Panc1 (cell line): ENCODE measurements at regions of chr5 and their contacts with region 1.

Region 1: GRCh38 chr5:127590156-127590722 is 58.6 kb upstream of the CTXN3 start:
- DNase-seq: no peak
- ATAC-seq: no peak
- H3K4me3 ChIP-seq: no peak overlapping the region
- H3K27ac ChIP-seq: no peak overlapping the region
- H3K4me1 ChIP-seq: no peaks in the 10 kb centered on the region
- H3K27me3 ChIP-seq: no peaks in the 10 kb centered on the region
- CTCF ChIP-seq: no peak

Region 2: DNA sequence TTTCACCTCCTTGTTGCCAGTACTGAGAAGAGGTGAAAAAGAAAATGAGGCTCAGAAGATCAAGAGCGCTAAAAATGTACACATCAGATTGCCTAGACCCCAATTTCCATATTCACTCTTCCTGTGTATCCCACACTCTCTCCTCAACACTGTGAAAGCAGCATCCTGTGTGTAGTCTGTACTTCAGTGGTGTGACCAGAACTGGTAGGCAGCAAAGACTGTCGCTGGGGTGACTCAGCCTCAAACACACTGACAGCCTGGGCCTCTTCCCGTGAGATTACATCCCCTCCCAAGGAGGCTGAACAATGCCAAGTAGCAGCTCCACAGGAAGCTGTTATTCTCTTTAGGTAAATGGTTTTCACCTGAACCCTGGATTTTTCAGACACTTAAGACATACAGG is 248.4 kb after region 1 on chr5:
- CTCF ChIA-PET with region 1: no interaction called
- POLR2A ChIA-PET with region 1: interaction called, 10 read pairs
- in situ Hi-C with region 1: no loop called
- intact Hi-C with region 1: no loop called
- DNase-seq: no peak
- ATAC-seq: no peak
- H3K4me3 ChIP-seq: no peak overlapping the region
- H3K27ac ChIP-seq: no peak overlapping the region
- H3K4me1 ChIP-seq: no peaks in the 10 kb centered on the region
- H3K27me3 ChIP-seq: no peaks in the 10 kb centered on the region
- CTCF ChIP-seq: no peak

Region 3: GRCh38 chr5:128674825-128675446 is 1084.7 kb after region 1 on chr5:
- CTCF ChIA-PET with region 1: no interaction called
- POLR2A ChIA-PET with region 1: no interaction called
- in situ Hi-C with region 1: no loop called
- intact Hi-C with region 1: no loop called
- DNase-seq: peak; percentile 15
- ATAC-seq: no peak
- H3K4me3 ChIP-seq: no peak overlapping the region
- H3K27ac ChIP-seq: no peak overlapping the region
- H3K4me1 ChIP-seq: no peaks in the 10 kb centered on the region
- H3K27me3 ChIP-seq: no peaks in the 10 kb centered on the region
- CTCF ChIP-seq: peak; percentile 68